Activated CD4-positive, alpha-beta T cell treated with anti-CD3 and anti-CD28 coated beads for 36 hours (primary cell): ENCODE measurements at regions of chr2 and their contacts with region 1.

Region 1: GRCh38 chr2:15560988-15561573 is at the start of gene NBAS:
- DNase-seq: peak; percentile 90
- ATAC-seq: peak; percentile 80
- H3K4me3 Mint-ChIP-seq: peak within 1 kb of the TSS; percentile 96
- H3K27ac Mint-ChIP-seq: peak within 1 kb of the TSS; percentile 97
- H3K4me1 Mint-ChIP-seq: peaks cover 34% of the 10 kb centered on the region
- H3K27me3 Mint-ChIP-seq: peaks cover 2% of the 10 kb centered on the region
- total RNA-seq, gene NBAS: 38.1 to 44.3 TPM

Region 2: GRCh38 chr2:15107137-15107536 is 453.9 kb before region 1 on chr2:
- CTCF ChIA-PET with region 1: no interaction called
- POLR2A ChIA-PET with region 1: no interaction called
- intact Hi-C with region 1: no loop called
- DNase-seq: no peak
- ATAC-seq: no peak
- H3K4me3 Mint-ChIP-seq: no peak overlapping the region
- H3K27ac Mint-ChIP-seq: no peak overlapping the region
- H3K4me1 Mint-ChIP-seq: no peaks in the 10 kb centered on the region
- H3K27me3 Mint-ChIP-seq: peaks cover 7% of the 10 kb centered on the region

Region 3: DNA sequence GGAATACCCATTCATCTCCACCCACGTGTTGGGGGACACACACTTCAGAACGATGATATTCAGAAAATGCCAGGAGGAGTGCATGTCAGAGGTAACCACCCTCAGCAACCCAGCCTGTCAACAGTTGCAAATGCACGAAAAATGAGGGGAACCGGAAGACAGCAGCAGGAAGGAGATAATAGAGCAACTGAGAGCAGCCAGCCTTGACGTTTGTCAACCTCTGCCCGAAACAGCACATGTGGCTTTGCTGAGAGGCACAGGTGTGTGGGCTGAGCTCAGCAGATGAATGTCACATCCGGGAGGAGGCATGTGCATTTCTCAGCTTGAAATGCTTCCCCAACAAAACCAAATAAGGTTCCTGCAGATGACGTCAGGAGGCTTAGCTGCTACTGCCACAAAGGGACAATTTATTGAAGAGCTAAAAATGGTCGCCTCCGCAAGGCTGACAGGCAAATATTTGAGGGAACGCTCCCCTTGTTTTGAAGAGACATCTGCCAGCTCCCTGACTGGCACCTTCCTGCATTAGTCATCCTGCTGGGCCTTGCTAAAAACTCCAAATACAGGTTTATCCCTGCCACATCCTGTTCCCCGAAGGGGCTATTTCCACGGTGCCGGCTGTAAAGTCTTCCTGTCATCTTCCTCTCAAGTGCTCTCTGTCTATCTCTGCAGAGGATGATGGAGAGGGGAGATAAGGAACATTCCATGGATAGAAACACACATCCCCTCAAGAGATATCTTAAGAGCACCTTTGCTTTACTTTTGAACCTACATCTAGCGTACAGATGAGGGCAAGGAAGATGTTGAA is 418.8 kb before region 1 on chr2:
- CTCF ChIA-PET with region 1: no interaction called
- POLR2A ChIA-PET with region 1: no interaction called
- intact Hi-C with region 1: loop called in 1 of 2 experiments (anchors 5 kb)
- DNase-seq: peak; percentile 89
- ATAC-seq: peak; percentile 95
- H3K4me3 Mint-ChIP-seq: peak overlapping the region; percentile 35
- H3K27ac Mint-ChIP-seq: peak overlapping the region; percentile 93
- H3K4me1 Mint-ChIP-seq: peaks cover 26% of the 10 kb centered on the region
- H3K27me3 Mint-ChIP-seq: peaks cover 3% of the 10 kb centered on the region

Region 4: DNA sequence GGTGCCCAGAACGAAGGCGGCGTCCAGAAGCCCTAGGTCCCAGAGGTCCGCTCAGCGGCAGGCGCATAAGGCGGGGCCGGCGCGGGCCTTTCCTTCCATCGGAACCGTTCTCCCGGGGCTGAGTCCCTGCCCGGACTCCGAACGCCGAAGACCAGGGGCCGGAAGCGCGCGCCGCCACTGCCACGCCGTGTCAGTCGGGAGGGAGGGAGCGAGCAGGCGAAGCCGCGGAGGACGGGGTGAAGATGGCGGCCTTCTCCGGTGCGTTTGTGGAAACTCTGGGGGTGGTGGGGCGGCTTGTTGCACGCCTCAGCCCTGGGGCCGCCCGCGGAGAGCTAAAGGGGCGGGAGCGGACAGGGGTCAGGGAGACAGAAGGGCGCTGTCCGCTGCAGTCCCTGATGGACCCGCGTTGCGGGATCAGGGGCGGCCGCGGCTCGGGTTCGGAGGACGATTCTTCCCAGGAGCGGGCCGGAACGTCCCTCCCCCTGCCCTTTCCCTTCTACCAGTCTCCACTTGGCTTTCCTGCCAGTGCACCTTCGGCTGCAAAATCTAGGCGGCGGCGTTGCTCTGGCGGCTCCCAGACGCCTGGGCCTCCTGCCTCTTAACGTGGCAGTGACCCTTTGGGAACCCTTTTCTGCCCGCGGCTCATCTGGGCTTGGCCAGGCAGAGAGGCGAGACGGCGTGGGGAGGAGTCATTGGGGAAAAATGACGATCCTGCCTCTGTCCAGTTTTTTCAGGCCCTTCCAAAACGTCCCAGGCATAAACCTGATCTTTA is 30.8 kb after region 1 on chr2 and contains the start of gene DDX1:
- CTCF ChIA-PET with region 1: interaction called, 6 read pairs
- POLR2A ChIA-PET with region 1: interaction called, 4 read pairs
- intact Hi-C with region 1: loop called (anchors 1 kb)
- DNase-seq: peak; percentile 92
- ATAC-seq: peak; percentile 94
- H3K4me3 Mint-ChIP-seq: peak within 1 kb of the TSS; percentile 90
- H3K27ac Mint-ChIP-seq: peak within 1 kb of the TSS; percentile 98
- H3K4me1 Mint-ChIP-seq: peaks cover 36% of the 10 kb centered on the region
- H3K27me3 Mint-ChIP-seq: no peaks in the 10 kb centered on the region
- total RNA-seq, gene DDX1: 87.6 to 96.2 TPM

Region 5: DNA sequence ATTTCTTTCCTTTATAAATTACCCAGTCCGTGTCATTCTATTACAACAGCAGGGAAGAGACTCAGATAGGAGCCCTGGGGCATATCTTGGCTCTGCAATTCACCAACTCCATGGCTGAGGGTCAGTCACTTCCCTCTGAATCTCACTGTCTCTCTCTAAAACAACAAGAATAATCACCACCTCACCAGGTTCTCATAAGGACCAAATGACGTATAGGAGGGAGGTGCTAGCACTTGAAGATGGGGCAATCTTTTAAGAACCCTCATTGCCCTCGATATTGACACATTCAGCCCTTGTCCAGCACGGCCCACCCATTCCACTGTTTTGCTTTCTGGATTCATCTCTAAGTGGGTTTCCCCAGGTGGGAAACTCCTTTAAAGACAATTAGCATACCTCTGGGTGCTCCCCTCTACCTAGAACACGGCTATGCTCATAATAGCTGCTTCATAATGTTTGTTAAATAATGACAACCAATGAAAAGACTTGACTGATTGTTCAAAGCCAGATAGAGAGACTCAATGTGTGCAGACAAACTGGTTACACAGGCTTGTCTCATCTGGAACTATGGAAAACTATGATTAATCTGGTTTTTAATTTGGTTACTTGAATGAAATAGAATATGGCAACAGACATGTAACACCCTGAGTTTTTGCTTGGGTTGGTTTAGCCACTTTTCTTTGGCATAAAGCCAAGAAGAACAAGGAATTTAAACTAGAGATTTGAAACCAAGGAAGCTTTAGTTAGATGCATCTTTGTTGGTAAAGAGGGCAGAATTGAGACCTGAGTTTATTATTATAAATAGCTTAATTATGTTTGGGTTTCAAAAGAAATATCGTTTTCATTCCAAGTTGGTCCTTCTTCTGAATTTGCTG is 394.4 kb after region 1 on chr2:
- CTCF ChIA-PET with region 1: no interaction called
- POLR2A ChIA-PET with region 1: no interaction called
- intact Hi-C with region 1: no loop called
- DNase-seq: no peak
- ATAC-seq: no peak
- H3K4me3 Mint-ChIP-seq: no peak overlapping the region
- H3K27ac Mint-ChIP-seq: no peak overlapping the region
- H3K4me1 Mint-ChIP-seq: no peaks in the 10 kb centered on the region
- H3K27me3 Mint-ChIP-seq: no peaks in the 10 kb centered on the region